Spleen (tissue), 13 donors: ENCODE measurements at regions of chr2 and their contacts with region 1.

Region 1: DNA sequence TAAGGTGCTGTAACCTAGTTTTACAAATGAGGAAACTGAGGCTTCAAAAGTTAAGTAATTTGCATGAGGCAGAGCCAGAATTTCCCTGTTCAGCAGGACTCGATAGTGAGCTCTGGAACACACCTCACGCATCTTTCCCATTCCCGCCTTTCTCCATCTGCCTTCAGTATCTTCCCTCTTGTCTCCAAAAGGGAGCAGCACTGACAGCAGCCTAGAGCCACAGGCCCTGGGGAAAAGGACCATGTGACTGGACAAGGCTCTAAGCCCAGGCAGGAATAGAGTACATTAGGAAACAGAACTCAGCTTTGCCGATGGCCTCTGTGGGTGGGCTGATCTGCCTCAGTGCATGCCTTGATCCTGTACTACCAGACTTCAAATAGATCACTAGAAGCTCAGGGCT is 21.5 kb downstream of the GPR155 start:
- DNase-seq: no peak
- H3K4me3 ChIP-seq: no peak overlapping the region
- H3K27ac ChIP-seq: no peak overlapping the region
- H3K4me1 ChIP-seq: peaks cover 0 to 3% (median 0%) of the 10 kb centered on the region in 6 donors
- H3K27me3 ChIP-seq: no peaks in the 10 kb centered on the region
- CTCF ChIP-seq: no peak
- POLR2A ChIP-seq: no peak

Region 2: DNA sequence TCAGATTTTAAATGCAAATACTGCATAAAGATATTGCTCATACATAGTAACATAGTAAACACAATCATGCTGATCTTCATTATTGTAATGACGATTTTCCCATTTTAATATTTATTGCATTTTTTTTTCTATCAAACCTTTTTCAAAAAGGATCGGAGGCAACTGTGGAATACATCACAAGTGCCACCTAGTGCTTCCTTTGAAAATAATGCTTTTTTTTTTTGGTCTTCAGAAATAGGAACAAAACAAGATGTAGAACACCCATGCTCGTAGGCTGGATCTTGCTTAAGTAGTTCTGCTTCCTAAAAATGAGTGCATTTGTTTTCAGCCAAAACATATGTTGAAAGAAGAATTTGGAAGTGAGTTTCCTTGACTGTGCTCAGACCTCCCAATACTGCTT is 57.2 kb after region 1 on chr2:
- intact Hi-C with region 1: loop called (anchors 2 kb)
- DNase-seq: no peak
- H3K4me3 ChIP-seq: peak overlapping the region in 1 of 8 donors; percentile 43
- H3K27ac ChIP-seq: peak overlapping the region in 5 of 8 donors; percentile 22 to 88 (median 82)
- H3K4me1 ChIP-seq: peaks cover 0 to 35% (median 10%) of the 10 kb centered on the region in 6 donors
- H3K27me3 ChIP-seq: no peaks in the 10 kb centered on the region
- CTCF ChIP-seq: peak in 8 of 11 experiments; percentile 21 to 43 (median 36)
- POLR2A ChIP-seq: no peak

Region 3: DNA sequence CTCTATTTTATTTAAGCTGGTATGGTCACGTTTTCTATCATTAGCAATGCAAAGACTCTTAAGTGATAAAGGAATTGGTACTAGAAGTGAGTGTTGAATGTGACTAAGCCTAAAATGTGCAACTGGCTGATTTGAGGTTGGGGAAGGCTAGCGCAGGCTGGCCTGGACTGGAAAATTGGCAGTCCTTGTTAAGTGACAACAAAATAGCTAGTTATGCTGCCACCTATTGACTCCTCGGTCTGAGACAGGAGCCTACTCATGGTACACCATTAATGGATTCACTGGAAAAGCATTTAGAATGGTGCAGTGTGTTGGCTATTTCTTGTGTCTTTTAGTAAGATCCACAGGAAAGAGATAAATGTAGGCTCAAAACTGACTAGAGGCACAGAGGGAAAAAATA is 138.0 kb after region 1 on chr2:
- intact Hi-C with region 1: loop called (anchors 10 kb)
- DNase-seq: peak; percentile 70
- H3K4me3 ChIP-seq: no peak overlapping the region
- H3K27ac ChIP-seq: peak overlapping the region in 4 of 8 donors; percentile 35 to 95 (median 69)
- H3K4me1 ChIP-seq: peaks cover 34 to 100% (median 78%) of the 10 kb centered on the region in 6 donors
- H3K27me3 ChIP-seq: no peaks in the 10 kb centered on the region
- CTCF ChIP-seq: peak in 10 of 11 experiments; percentile 15 to 69 (median 52)
- POLR2A ChIP-seq: no peak

Region 4: GRCh38 chr2:174688079-174688478 is 222.8 kb after region 1 on chr2:
- intact Hi-C with region 1: loop called (anchors 5 kb)
- DNase-seq: no peak
- H3K4me3 ChIP-seq: no peak overlapping the region
- H3K27ac ChIP-seq: no peak overlapping the region
- H3K4me1 ChIP-seq: peaks cover 8 to 45% (median 28%) of the 10 kb centered on the region in 6 donors
- H3K27me3 ChIP-seq: no peaks in the 10 kb centered on the region
- CTCF ChIP-seq: peak in 9 of 11 experiments; percentile 24 to 59 (median 52)
- POLR2A ChIP-seq: no peak

Region 5: GRCh38 chr2:174856447-174856846 is 391.1 kb after region 1 on chr2:
- intact Hi-C with region 1: no loop called
- DNase-seq: no peak
- H3K4me3 ChIP-seq: no peak overlapping the region
- H3K27ac ChIP-seq: no peak overlapping the region
- H3K4me1 ChIP-seq: no peaks in the 10 kb centered on the region
- H3K27me3 ChIP-seq: no peaks in the 10 kb centered on the region
- CTCF ChIP-seq: no peak
- POLR2A ChIP-seq: no peak